Esophagus muscularis mucosa (tissue), 4 donors: ENCODE measurements at regions of chr11 and their contacts with region 1.

Region 1: GRCh38 chr11:100575870-100576705 is 111.0 kb upstream of the ARHGAP42 start:
- DNase-seq: no peak
- H3K4me3 ChIP-seq: no peak overlapping the region
- H3K27ac ChIP-seq: no peak overlapping the region
- H3K4me1 ChIP-seq: peaks cover 0 to 27% (median 16%) of the 10 kb centered on the region in 4 donors
- H3K27me3 ChIP-seq: no peaks in the 10 kb centered on the region
- CTCF ChIP-seq: peak; percentile 74 to 80 (median 79)
- EP300 ChIP-seq: no peak
- POLR2A ChIP-seq: no peak

Region 2: DNA sequence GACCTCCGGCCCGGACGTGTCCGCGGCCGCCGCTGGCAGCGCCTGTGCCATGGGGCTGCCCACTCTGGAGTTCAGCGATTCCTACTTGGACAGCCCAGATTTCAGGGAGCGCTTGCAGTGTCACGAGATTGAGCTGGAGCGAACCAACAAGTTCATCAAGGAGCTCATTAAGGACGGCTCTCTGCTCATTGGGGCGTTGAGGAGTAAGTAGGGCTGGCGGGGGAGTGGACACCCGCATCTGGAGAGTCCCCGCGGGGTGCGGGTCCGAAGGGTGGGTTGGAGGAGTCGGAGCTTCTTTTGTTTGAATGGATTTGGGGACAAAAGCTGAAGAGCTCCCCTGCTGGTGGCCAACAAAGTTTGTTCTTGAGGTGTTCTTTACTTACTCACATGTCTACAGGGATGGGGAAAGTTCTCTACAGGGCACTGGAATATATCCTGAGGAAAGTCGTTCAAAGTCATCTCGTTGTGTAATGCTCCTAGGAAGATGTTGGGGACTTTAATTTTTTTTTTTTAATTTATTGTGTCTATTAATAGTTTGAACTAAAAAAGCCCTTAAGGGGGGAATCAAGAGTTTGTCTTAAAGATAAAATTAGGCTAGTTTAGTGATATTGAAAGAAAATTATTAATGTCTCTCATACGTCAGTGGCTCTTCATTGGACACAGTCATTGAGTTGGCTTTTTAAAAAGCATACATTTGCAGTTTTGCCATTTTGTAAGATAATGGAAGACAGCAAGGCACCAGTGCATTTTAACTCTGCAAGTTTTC is 111.7 kb after region 1 on chr11:
- intact Hi-C with region 1: loop called (anchors 2 kb)
- DNase-seq: peak; percentile 93
- H3K4me3 ChIP-seq: peak overlapping the region; percentile 67 to 88 (median 80)
- H3K27ac ChIP-seq: peak overlapping the region; percentile 72 to 86 (median 80)
- H3K4me1 ChIP-seq: peaks cover 10 to 39% (median 38%) of the 10 kb centered on the region in 4 donors
- H3K27me3 ChIP-seq: no peaks in the 10 kb centered on the region
- CTCF ChIP-seq: peak; percentile 41 to 68 (median 59)
- EP300 ChIP-seq: no peak
- POLR2A ChIP-seq: no peak

Region 3: DNA sequence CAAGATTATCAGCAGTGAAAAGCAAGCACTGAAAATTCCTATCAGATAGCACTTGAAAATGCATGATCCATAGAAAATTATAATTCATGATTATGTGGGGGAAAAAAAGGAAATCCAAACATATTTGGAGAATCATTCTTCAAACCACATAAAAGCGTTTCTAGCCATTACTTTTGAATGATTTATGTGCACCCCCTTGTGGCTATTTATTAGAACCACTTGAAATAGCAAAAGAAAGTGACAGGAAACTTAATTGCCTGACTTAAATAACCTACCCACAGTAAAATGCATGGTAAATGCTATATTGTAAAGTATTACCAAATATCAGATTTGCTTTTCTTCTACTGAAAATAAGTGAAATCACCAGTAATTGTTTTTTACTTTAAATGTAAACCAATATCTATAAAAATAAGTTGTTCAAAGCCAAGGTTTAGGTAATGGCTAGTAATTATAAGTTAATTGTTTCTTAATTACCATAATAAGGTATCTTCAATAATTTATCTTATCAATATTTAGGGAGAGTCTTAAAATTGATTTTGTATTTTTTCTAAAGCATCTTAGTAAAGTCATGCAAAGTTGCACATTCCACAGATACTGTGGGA is 279.5 kb after region 1 on chr11:
- intact Hi-C with region 1: loop called (anchors 2 kb)
- DNase-seq: no peak
- H3K4me3 ChIP-seq: no peak overlapping the region
- H3K27ac ChIP-seq: no peak overlapping the region
- H3K4me1 ChIP-seq: no peaks in the 10 kb centered on the region
- H3K27me3 ChIP-seq: no peaks in the 10 kb centered on the region
- CTCF ChIP-seq: peak; percentile 67 to 71 (median 70)
- EP300 ChIP-seq: no peak
- POLR2A ChIP-seq: no peak

Region 4: DNA sequence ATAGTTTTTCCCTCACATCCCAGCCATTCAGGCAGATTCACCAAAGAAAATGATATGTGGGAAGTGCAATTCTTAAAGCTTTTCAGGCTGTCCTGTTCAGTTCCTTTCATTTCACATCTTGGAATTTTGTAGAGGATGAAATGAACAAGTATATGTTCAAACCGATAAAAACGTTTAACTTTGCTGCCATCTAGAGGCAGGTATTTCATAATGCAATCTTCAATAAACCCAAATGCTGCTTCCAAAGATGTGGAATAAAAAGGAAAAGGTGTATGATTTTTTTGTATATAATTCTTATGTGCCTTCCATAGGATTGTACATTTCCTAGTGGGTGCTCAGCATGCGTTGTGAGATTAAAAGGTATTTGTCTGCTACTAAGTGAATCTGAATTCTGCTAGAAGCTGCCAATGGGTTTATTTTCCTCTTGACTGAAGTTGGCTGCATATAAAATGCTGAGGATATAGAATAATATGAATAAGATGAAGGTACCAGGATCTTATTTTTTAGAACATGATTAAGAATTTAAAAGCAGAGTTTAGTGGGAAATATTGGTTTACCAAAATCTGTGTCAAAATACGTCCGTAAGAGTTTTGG is 354.2 kb after region 1 on chr11:
- intact Hi-C with region 1: loop called (anchors 2 kb)
- DNase-seq: no peak
- H3K4me3 ChIP-seq: no peak overlapping the region
- H3K27ac ChIP-seq: no peak overlapping the region
- H3K4me1 ChIP-seq: no peaks in the 10 kb centered on the region
- H3K27me3 ChIP-seq: no peaks in the 10 kb centered on the region
- CTCF ChIP-seq: peak; percentile 59 to 76 (median 65)
- EP300 ChIP-seq: no peak
- POLR2A ChIP-seq: no peak